WTC11 (cell line): ENCODE measurements at regions of chr11 and their contacts with region 1.

Region 1: GRCh38 chr11:61532139-61533038 is 23.8 kb downstream of the LRRC10B start:
- DNase-seq: peak; percentile 77
- ATAC-seq: peak; percentile 85
- H3K4me3 Mint-ChIP-seq: no peak overlapping the region
- H3K27ac Mint-ChIP-seq: no peak overlapping the region
- H3K4me1 Mint-ChIP-seq: peaks cover 10% of the 10 kb centered on the region
- H3K27me3 Mint-ChIP-seq: no peaks in the 10 kb centered on the region
- CTCF ChIP-seq: peak; percentile 98

Region 2: GRCh38 chr11:61315260-61315659 is 217.1 kb before region 1 on chr11:
- CTCF ChIA-PET with region 1: no interaction called
- POLR2A ChIA-PET with region 1: no interaction called
- DNase-seq: no peak
- ATAC-seq: no peak
- H3K4me3 Mint-ChIP-seq: no peak overlapping the region
- H3K27ac Mint-ChIP-seq: no peak overlapping the region
- H3K4me1 Mint-ChIP-seq: no peaks in the 10 kb centered on the region
- H3K27me3 Mint-ChIP-seq: no peaks in the 10 kb centered on the region
- CTCF ChIP-seq: no peak

Region 3: GRCh38 chr11:61460474-61460881 is 71.9 kb before region 1 on chr11:
- CTCF ChIA-PET with region 1: interaction called, 10 read pairs
- POLR2A ChIA-PET with region 1: no interaction called
- DNase-seq: no peak
- ATAC-seq: no peak
- H3K4me3 Mint-ChIP-seq: no peak overlapping the region
- H3K27ac Mint-ChIP-seq: 0 out of 2 replicates have a peak overlapping the region, but pooled peaks have one; percentile 21
- H3K4me1 Mint-ChIP-seq: peaks cover 2% of the 10 kb centered on the region; the same call in 1 of the 2 replicates
- H3K27me3 Mint-ChIP-seq: no peaks in the 10 kb centered on the region
- CTCF ChIP-seq: no peak

Region 4: DNA sequence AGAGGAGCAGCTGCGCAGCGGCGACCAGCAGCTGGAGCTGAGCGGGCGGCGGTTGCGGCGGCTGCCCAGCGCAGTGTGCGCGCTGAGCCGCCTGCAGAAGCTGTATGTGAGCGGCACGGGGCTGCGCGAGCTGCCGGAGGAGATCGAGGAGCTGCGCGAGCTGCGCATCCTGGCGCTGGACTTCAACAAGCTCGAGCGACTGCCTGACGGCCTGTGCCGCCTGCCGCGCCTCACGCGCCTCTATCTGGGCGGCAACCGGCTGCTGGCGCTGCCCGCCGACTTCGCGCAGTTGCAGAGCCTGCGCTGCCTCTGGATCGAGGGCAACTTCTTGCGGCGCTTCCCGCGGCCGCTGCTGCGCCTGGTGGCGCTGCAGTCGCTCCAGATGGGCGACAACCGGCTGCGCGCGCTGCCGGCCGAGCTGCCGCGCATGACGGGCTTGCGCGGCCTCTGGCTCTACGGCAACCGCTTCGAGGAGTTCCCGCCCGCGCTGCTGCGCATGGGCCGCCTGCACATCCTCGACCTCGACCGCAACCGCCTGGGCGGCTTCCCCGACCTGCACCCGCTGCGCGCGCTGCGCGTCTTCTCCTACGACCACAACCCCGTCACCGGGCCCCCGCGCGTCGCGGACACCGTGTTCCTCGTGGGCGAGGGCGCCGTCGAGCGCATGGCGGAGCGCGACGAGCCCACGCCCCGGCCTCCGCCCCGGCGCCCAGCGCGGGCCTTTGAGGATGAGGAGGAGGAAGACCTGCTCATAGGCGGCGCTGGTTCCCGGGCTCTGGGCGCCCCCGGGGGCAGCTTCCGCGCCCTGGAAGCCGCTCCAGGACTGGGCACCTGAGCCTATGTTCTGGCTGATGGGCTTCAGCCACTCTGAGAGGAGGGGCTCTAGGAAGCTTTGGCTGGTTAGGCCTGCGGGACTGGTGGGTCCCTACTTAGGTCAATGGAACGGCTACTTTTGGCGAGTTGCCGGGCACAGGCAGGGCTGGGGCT is 23.1 kb before region 1 on chr11:
- CTCF ChIA-PET with region 1: interaction called, 241 read pairs
- POLR2A ChIA-PET with region 1: no interaction called
- DNase-seq: peak; percentile 80
- ATAC-seq: peak; percentile 63
- H3K4me3 Mint-ChIP-seq: peak overlapping the region; percentile 48
- H3K27ac Mint-ChIP-seq: no peak overlapping the region
- H3K4me1 Mint-ChIP-seq: peaks cover 58% of the 10 kb centered on the region
- H3K27me3 Mint-ChIP-seq: peaks cover 59% of the 10 kb centered on the region
- CTCF ChIP-seq: no peak

Region 5: DNA sequence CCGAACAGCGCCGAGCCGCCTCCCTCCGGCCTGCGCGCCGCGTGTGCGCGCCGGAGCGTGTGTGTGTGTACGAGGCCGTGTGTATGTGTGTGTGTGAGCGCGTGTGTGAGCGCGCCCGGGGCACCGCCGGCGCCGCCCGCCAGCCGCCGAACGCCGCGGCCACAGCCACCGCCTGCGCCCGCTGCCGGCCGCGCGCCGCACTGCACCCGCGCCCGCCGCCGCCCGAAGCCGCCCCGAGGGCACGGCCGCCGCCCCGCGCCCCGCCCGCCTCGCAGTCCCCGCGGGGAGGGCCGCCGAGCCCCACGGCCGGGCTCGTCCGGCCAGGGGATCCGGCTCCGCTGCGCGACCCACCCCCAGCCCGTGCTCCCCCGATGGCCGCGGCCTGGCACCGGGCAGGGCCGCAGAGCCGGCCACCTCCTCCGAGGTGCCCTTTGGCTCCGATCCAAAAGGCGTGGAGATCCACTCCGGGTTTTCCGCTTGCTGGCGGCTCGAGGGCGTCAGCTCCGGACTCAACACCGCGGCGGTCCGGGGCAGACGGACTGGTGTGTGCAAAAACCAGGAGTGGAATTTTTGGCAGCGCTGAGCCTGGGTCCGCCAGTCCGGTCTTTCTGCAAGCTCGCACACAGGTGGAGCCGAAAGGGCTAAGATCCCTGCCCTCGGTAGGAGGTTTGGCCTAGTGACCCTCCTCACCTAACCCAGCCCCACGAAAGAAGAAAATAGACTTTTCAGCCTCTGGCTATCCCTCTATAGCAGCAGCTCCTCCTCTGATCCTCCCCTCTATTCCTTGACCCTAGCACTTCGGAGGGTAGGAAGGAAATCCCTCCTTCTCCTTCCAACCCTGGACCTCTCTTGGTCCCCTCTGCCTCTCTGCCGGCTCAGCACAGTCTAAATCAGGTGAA is 48.9 kb after region 1 on chr11 and contains the start of gene SYT7:
- CTCF ChIA-PET with region 1: interaction called, 22 read pairs
- POLR2A ChIA-PET with region 1: no interaction called
- DNase-seq: peak; percentile 99
- ATAC-seq: peak; percentile 83
- H3K4me3 Mint-ChIP-seq: peak within 1 kb of the TSS; percentile 79
- H3K27ac Mint-ChIP-seq: no peak within 1 kb of the TSS
- H3K4me1 Mint-ChIP-seq: peaks cover 56% of the 10 kb centered on the region
- H3K27me3 Mint-ChIP-seq: peaks cover 61% of the 10 kb centered on the region
- CTCF ChIP-seq: no peak; the same call in 1 of the 2 replicates
- total RNA-seq, gene SYT7: 12.5 to 18.9 TPM (median 18.2 TPM) in 3 replicates

Region 6: GRCh38 chr11:61598886-61599868 is 66.8 kb after region 1 on chr11:
- CTCF ChIA-PET with region 1: interaction called, 13 read pairs
- POLR2A ChIA-PET with region 1: no interaction called
- DNase-seq: peak; percentile 59
- ATAC-seq: peak; percentile 77
- H3K4me3 Mint-ChIP-seq: peak overlapping the region; percentile 38; the same call in 1 of the 2 replicates
- H3K27ac Mint-ChIP-seq: peak overlapping the region; percentile 60; the same call in 1 of the 2 replicates
- H3K4me1 Mint-ChIP-seq: peaks cover 44% of the 10 kb centered on the region
- H3K27me3 Mint-ChIP-seq: no peaks in the 10 kb centered on the region; the same call in 1 of the 2 replicates
- CTCF ChIP-seq: no peak

Region 7: DNA sequence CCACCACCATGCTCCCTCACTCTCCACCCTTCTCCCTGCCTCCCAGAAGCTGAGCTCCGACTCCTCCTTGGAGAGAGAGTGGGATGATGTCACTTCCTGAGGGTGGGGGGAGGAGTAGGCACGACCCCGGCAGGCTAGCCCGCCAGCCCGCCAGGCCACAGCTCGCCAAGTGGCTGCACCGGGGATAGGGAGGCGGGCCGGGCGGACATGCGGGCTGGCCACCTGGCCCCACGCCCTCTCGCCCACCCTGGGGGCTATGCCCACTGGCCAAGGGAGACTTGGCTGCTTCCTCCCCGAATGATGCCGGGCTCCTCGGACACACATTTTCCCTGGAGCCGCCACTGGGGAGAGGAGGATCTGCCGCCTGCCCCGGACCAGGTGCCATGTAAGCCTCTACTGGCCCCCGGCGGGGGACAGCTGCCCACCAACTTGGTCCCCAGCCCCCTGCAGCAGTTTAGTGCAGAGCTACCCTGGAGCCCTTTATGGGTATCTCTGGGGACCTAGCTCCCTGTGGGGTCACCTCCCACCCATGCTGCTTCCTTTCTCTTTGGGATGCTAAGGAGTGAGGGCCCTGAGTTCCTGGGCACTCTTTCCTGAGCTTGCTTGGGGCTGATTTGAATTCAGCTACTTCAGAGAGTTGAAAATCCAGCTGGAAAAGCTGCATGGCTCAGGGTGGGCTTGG is 186.4 kb after region 1 on chr11:
- CTCF ChIA-PET with region 1: interaction called, 11 read pairs
- POLR2A ChIA-PET with region 1: no interaction called
- DNase-seq: peak; percentile 73
- ATAC-seq: peak; percentile 79
- H3K4me3 Mint-ChIP-seq: peak overlapping the region; percentile 61
- H3K27ac Mint-ChIP-seq: peak overlapping the region; percentile 32; the same call in 1 of the 2 replicates
- H3K4me1 Mint-ChIP-seq: peaks cover 36% of the 10 kb centered on the region
- H3K27me3 Mint-ChIP-seq: peaks cover 3% of the 10 kb centered on the region; the same call in 1 of the 2 replicates
- CTCF ChIP-seq: no peak